ENCODE measurements at regions of chr2 and their contacts with region 1.

Region 1: DNA sequence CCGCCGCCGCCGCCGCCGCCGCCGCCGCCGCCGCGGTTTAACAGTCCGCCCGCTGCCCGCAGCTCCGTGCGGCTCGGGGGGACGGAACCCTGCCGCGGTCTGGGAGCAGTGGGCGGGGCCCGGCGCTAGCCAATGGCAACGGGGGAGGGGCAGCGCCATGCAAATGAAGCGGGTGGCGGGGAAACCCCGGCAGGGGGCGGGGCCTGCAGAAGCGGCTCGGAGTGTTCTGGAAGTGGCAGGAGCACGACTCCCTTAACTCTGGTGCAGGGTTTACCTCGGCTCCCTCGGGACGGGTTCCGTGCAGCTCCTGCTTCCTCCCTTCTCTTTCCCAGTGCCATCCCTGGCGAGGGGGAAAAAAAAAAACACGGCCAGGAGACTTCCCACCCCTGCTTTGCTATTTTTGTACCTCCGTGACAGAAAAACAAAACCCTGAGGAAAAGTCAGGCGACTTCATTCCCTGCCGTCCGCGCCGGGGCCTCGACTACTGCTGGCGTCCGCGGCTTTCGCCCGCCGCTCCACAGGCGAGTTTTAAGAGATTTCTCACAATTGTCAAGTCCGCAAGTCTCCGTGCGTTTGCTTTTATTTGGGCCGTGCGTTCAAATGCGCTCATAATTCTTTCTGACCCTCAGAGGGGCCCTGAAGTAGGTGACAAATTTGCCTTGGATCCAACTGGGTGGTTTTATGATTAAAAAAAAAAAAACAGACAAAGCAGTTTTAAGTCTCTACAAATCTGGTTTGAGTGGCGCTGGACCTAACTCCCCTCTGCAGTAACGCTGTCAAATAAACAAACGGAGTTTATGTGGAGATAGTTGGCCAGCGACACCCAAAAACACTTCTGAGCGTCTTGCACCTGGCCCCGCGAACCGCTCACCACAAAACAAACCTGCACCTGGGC is at the start of gene KANSL1L:
- DNase-seq: peak; percentile 99
- H3K4me3 Mint-ChIP-seq: peak within 1 kb of the TSS; percentile 98
- H3K27ac Mint-ChIP-seq: peak within 1 kb of the TSS; percentile 99
- H3K4me1 Mint-ChIP-seq: peaks cover 25% of the 10 kb centered on the region
- H3K27me3 Mint-ChIP-seq: peaks cover 27% of the 10 kb centered on the region
- total RNA-seq, gene KANSL1L: 4.6 and 5.0 TPM in 2 replicates

Region 2: GRCh38 chr2:210002158-210003157 is 169.1 kb before region 1 on chr2 and contains the start of gene RPE:
- intact Hi-C with region 1: loop called (anchors 1 kb)
- DNase-seq: peak; percentile 99
- H3K4me3 Mint-ChIP-seq: peak within 1 kb of the TSS; percentile 99
- H3K27ac Mint-ChIP-seq: peak within 1 kb of the TSS; percentile 91
- H3K4me1 Mint-ChIP-seq: peaks cover 42% of the 10 kb centered on the region
- H3K27me3 Mint-ChIP-seq: no peaks in the 10 kb centered on the region
- total RNA-seq, gene RPE: 61.4 and 64.1 TPM in 2 replicates

Region 3: DNA sequence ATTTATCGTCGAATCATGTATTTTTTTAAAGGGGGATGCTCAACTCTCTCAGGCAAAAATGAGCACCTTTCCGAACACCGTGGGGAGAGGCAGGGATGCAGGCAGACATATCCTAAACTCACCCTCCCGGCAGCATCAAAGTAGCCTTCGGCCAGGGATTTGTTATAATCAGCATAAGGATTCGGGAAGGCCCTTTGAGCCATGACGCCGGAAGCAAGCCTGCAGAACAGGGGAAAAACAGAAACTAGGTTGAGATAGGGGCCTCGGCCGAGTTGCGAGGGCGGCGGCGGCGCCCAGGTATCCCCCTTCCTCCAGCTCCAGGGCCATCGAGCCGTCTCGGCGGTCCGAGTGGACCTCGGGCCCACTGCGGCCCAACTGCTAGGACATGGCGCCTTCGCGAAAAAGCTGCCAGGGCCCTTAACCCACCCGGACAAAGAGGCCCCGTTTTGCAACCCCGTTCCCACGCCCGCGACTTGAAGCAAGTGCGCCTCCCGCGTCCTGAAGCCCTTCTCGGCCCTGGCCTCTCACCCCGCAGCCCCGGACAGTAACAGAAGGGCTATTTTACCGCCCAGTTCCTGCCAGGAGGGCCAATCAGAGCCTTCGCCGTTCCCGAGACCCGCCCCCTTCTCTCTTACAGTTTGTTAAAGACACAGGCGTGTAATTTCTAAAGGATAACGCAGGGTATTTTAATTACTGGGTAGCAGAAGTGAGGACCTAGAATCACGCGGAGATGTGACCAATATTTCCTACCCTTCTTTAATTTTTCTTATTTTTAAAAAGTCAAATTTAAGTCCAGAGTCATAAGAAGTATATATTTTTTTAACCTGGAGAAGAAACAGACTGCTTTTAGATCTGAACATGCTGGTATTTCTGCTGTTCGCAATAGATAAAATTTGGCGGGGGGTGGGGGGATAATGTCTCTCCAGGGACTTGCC is 304.9 kb after region 1 on chr2 and contains the start of gene LANCL1:
- intact Hi-C with region 1: loop called (anchors 2 kb)
- DNase-seq: peak; percentile 95
- H3K4me3 Mint-ChIP-seq: peak within 1 kb of the TSS; percentile 99
- H3K27ac Mint-ChIP-seq: peak within 1 kb of the TSS; percentile 98
- H3K4me1 Mint-ChIP-seq: peaks cover 28% of the 10 kb centered on the region
- H3K27me3 Mint-ChIP-seq: no peaks in the 10 kb centered on the region
- total RNA-seq, gene LANCL1: 32.3 and 34.2 TPM in 2 replicates